IMR-90 (cell line): ENCODE measurements at regions of chr12 and their contacts with region 1.

Region 1: GRCh38 chr12:67482751-67483671 is 165.5 kb upstream of the DYRK2 start:
- DNase-seq: peak; percentile 56
- ATAC-seq: peak; percentile 44; the same call in 1 of the 2 replicates
- H3K4me3 ChIP-seq: no peak overlapping the region
- H3K27ac ChIP-seq: no peak overlapping the region
- H3K4me1 ChIP-seq: peaks cover 6% of the 10 kb centered on the region; the same call in 1 of the 2 replicates
- H3K27me3 ChIP-seq: peaks cover 2% of the 10 kb centered on the region; the same call in 1 of the 2 replicates
- CTCF ChIP-seq: no peak
- POLR2A ChIP-seq: no peak
- RAD21 ChIP-seq: no peak

Region 2: DNA sequence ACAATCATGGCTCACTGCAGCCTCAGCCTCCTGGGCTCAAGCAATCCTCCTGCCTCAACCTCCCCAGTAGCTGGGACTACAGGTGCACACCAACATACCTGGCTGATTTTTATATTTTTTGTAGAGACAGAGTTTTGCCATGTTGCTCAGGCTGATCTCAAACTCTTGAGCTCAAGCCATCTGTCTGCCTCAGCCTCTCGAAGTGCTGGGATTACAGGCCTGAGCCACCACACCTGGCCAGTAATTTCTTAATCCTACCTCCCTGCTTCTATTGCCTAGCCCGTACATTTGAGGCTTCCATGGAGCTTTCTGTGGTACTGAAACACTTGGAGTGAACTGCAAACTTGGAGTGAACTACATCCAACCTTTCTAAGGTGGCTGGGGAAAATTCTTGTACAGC is 1283.6 kb after region 1 on chr12:
- CTCF ChIA-PET with region 1: no interaction called
- POLR2A ChIA-PET with region 1: interaction called, 11 read pairs
- dilution Hi-C with region 1: no loop called
- in situ Hi-C with region 1: no loop called
- intact Hi-C with region 1: no loop called
- DNase-seq: no peak
- ATAC-seq: no peak
- H3K4me3 ChIP-seq: no peak overlapping the region
- H3K27ac ChIP-seq: no peak overlapping the region
- H3K4me1 ChIP-seq: no peaks in the 10 kb centered on the region
- H3K27me3 ChIP-seq: no peaks in the 10 kb centered on the region
- CTCF ChIP-seq: no peak
- POLR2A ChIP-seq: no peak
- RAD21 ChIP-seq: no peak